ENCODE measurements at regions of chr19 and their contacts with region 1.

Region 1: GRCh38 chr19:16366433-16367260 is 42.0 kb downstream of the KLF2 start:
- DNase-seq: no peak
- H3K4me3 ChIP-seq: no peak overlapping the region
- H3K27ac ChIP-seq: no peak overlapping the region
- H3K4me1 ChIP-seq: peaks cover 0 to 8% (median 0%) of the 10 kb centered on the region in 4 donors
- H3K27me3 ChIP-seq: no peaks in the 10 kb centered on the region
- CTCF ChIP-seq: no peak

Region 2: GRCh38 chr19:18194554-18195238 is 1828.0 kb after region 1 on chr19:
- intact Hi-C with region 1: loop called (anchors 5 kb)
- DNase-seq: no peak
- H3K4me3 ChIP-seq: peak overlapping the region in 1 of 2 donors; percentile 86
- H3K27ac ChIP-seq: peak overlapping the region in 1 of 2 donors; percentile 6
- H3K4me1 ChIP-seq: peaks cover 0 to 22% (median 16%) of the 10 kb centered on the region in 4 donors
- H3K27me3 ChIP-seq: no peaks in the 10 kb centered on the region
- CTCF ChIP-seq: no peak

Measured in tibial artery (tissue), 4 donors.